HCT116 (cell line): ENCODE measurements at regions of chr10 and their contacts with region 1.

Region 1: DNA sequence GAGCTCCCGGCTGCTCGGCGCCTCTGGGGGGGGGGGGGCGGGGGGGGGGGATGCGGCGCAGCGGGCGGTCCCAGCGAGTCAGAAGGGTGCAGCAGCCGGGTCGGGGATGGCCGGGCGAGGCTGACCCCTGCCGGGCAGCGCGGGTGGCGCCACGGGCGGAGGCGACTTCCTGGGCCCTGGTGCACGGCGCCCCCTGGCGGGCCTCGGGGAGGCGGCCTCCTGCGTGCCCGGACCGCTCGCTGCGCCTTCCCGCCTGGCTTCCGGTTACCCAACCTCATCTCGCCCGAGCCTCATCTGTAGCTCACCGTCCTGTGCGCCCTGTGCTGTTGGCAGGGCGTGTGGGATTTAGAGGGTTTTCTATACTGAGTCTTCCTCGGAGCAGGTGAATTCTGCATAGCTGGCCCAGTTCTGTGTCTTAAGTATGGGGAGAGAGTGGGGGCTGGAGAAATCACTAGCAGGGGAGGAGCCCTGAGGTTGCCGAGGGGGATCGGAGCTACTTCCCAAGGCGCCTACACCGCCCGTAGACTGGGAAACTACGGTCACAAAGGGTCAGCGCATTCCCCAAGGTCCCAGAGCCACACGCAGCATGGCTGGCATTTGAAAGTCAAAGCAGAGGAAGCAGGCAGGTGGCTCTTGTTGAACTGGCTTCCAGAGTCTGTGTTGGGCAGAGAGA is 28.3 kb upstream of the WDFY4 start:
- DNase-seq: peak; percentile 69
- ATAC-seq: peak; percentile 87
- H3K4me3 ChIP-seq: peak overlapping the region; percentile 54 to 69
- H3K27ac ChIP-seq: peak overlapping the region; percentile 77; the same call in 1 of the 2 replicates
- H3K4me1 ChIP-seq: peaks cover 0 to 22% of the 10 kb centered on the region in 2 experiments; a peak in 2 of 4 replicates
- H3K27me3 ChIP-seq: peaks cover 14% of the 10 kb centered on the region
- CTCF ChIP-seq: peak; percentile 86 to 98 (median 93)
- POLR2A ChIP-seq: no peak
- RAD21 ChIP-seq: peak; percentile 87

Region 2: GRCh38 chr10:48253970-48254657 is 402.3 kb before region 1 on chr10:
- CTCF ChIA-PET with region 1: no interaction called
- POLR2A ChIA-PET with region 1: no interaction called
- RAD21 ChIA-PET with region 1: no interaction called
- intact Hi-C with region 1: no loop called
- DNase-seq: no peak
- ATAC-seq: no peak; the same call in 1 of the 2 replicates
- H3K4me3 ChIP-seq: no peak overlapping the region
- H3K27ac ChIP-seq: no peak overlapping the region
- H3K4me1 ChIP-seq: peaks cover 4 to 23% of the 10 kb centered on the region in 2 experiments; a peak in 3 of 4 replicates
- H3K27me3 ChIP-seq: no peaks in the 10 kb centered on the region
- CTCF ChIP-seq: no peak
- POLR2A ChIP-seq: no peak
- RAD21 ChIP-seq: no peak

Region 3: GRCh38 chr10:48444266-48444665 is 212.1 kb before region 1 on chr10:
- CTCF ChIA-PET with region 1: interaction called, 17 read pairs
- POLR2A ChIA-PET with region 1: no interaction called
- RAD21 ChIA-PET with region 1: no interaction called
- intact Hi-C with region 1: no loop called
- DNase-seq: peak; percentile 12
- ATAC-seq: peak; percentile 65
- H3K4me3 ChIP-seq: no peak overlapping the region
- H3K27ac ChIP-seq: no peak overlapping the region
- H3K4me1 ChIP-seq: no peaks in the 10 kb centered on the region; a peak in 1 of 4 replicates
- H3K27me3 ChIP-seq: no peaks in the 10 kb centered on the region
- CTCF ChIP-seq: peak; percentile 16 to 39 (median 32); a peak in 4 of 6 replicates
- POLR2A ChIP-seq: no peak
- RAD21 ChIP-seq: peak; percentile 51

Region 4: GRCh38 chr10:48551861-48552591 is 104.4 kb before region 1 on chr10:
- CTCF ChIA-PET with region 1: interaction called, 86 read pairs
- POLR2A ChIA-PET with region 1: interaction called, 4 read pairs
- RAD21 ChIA-PET with region 1: interaction called, 6 to 12 read pairs
- intact Hi-C with region 1: loop called (anchors 1 kb)
- DNase-seq: peak; percentile 15
- ATAC-seq: peak; percentile 82
- H3K4me3 ChIP-seq: no peak overlapping the region
- H3K27ac ChIP-seq: no peak overlapping the region
- H3K4me1 ChIP-seq: no peaks in the 10 kb centered on the region
- H3K27me3 ChIP-seq: no peaks in the 10 kb centered on the region
- CTCF ChIP-seq: peak; percentile 63 to 94 (median 75)
- POLR2A ChIP-seq: no peak
- RAD21 ChIP-seq: peak; percentile 76

Region 5: GRCh38 chr10:48782386-48782785 is 126.0 kb after region 1 on chr10:
- CTCF ChIA-PET with region 1: no interaction called
- POLR2A ChIA-PET with region 1: no interaction called
- RAD21 ChIA-PET with region 1: no interaction called
- intact Hi-C with region 1: no loop called
- DNase-seq: no peak
- ATAC-seq: no peak
- H3K4me3 ChIP-seq: no peak overlapping the region
- H3K27ac ChIP-seq: no peak overlapping the region
- H3K4me1 ChIP-seq: no peaks in the 10 kb centered on the region
- H3K27me3 ChIP-seq: peaks cover 41% of the 10 kb centered on the region
- CTCF ChIP-seq: no peak
- POLR2A ChIP-seq: no peak
- RAD21 ChIP-seq: no peak

Region 6: GRCh38 chr10:48976196-48976595 is 319.8 kb after region 1 on chr10:
- CTCF ChIA-PET with region 1: interaction called, 7 read pairs
- POLR2A ChIA-PET with region 1: no interaction called
- RAD21 ChIA-PET with region 1: interaction called in 1 of 2 experiments, 5 read pairs
- intact Hi-C with region 1: loop called (anchors 5 kb)
- DNase-seq: peak; percentile 18
- ATAC-seq: peak; percentile 92
- H3K4me3 ChIP-seq: no peak overlapping the region
- H3K27ac ChIP-seq: no peak overlapping the region
- H3K4me1 ChIP-seq: no peaks in the 10 kb centered on the region
- H3K27me3 ChIP-seq: peaks cover 14% of the 10 kb centered on the region; the same call in 1 of the 2 replicates
- CTCF ChIP-seq: peak; percentile 48 to 53 (median 49); a peak in 5 of 6 replicates
- POLR2A ChIP-seq: no peak
- RAD21 ChIP-seq: peak; percentile 64

Region 7: DNA sequence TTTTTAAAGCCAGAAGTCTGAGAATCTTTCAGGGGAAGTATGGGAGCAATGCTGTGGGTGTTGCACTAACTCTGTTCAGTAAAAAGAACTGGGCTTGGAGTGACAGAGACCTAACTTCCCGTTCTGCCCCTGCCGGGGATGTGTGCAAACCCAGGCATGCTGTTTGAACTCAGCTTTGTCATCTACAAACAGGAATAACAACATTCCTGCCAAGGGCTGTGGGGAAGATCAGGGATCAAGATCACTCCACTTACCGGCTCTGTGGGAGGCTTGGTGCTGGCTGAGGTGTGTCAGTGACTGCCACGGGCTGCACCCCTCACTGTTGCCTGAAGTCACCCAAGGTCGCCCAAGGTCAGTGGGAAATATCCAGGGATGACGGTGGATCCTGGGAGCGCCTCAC is 762.6 kb after region 1 on chr10:
- CTCF ChIA-PET with region 1: no interaction called
- POLR2A ChIA-PET with region 1: no interaction called
- RAD21 ChIA-PET with region 1: no interaction called
- intact Hi-C with region 1: loop called (anchors 10 kb)
- DNase-seq: peak; percentile 75
- ATAC-seq: peak; percentile 93
- H3K4me3 ChIP-seq: peak overlapping the region in 1 of 2 experiments; percentile 34; a peak in 1 of 4 replicates
- H3K27ac ChIP-seq: peak overlapping the region; percentile 54
- H3K4me1 ChIP-seq: peaks cover 14 to 16% of the 10 kb centered on the region in 2 experiments
- H3K27me3 ChIP-seq: no peaks in the 10 kb centered on the region
- CTCF ChIP-seq: no peak
- POLR2A ChIP-seq: no peak
- RAD21 ChIP-seq: peak; percentile 11; the same call in 1 of the 2 replicates